Endothelial cell of umbilical vein (primary cell): ENCODE measurements at regions of chr2 and their contacts with region 1.

Region 1: GRCh38 chr2:120693121-120693520 is 42.5 kb upstream of the GLI2 start:
- DNase-seq: no peak
- H3K4me3 ChIP-seq: no peak overlapping the region
- H3K27ac ChIP-seq: no peak overlapping the region
- H3K4me1 ChIP-seq: peaks cover 5% of the 10 kb centered on the region
- H3K27me3 ChIP-seq: peaks cover 17% of the 10 kb centered on the region in 2 experiments
- CTCF ChIP-seq: no peak
- POLR2A ChIP-seq: no peak

Region 2: DNA sequence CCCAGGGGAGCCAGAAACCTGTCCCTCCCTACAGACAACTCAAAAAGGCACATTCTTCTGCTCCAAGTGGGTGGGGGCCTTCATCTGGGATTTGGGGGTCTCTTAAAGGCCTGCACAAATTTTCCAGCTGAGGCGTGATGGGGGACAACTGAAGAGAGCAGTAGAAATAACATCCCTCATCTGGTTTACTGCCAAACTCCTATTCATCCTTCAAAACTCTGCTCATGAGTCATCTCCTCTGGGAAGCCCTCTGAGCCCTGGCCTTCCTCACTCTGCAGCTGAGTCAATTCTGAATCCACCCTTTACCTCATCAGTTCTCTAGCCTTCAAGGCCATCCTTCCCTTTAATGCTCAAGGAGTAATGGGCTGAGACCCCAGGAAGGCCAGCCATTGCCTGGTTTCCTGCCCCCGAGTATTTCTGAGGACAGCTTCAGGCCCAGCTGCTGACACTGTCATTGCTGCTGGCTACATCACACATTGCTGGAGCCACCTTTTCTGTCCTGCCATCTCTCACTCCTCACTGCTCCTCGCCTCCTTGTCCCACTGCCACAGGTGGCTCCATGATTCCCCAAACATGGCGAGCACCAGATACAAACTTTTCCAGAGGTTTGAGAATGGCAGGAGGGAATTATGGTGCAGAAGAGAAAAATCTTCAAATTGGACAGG is 10.3 kb after region 1 on chr2:
- CTCF ChIA-PET with region 1: interaction called, 11 read pairs
- POLR2A ChIA-PET with region 1: no interaction called
- dilution Hi-C with region 1: no loop called
- intact Hi-C with region 1: no loop called
- DNase-seq: peak; percentile 61
- H3K4me3 ChIP-seq: no peak overlapping the region
- H3K27ac ChIP-seq: no peak overlapping the region
- H3K4me1 ChIP-seq: peaks cover 4% of the 10 kb centered on the region
- H3K27me3 ChIP-seq: peaks cover 2 to 5% of the 10 kb centered on the region in 2 experiments
- CTCF ChIP-seq: no peak
- POLR2A ChIP-seq: no peak

Region 3: GRCh38 chr2:120735746-120736170 is 42.6 kb after region 1 on chr2 and contains the start of gene GLI2:
- CTCF ChIA-PET with region 1: interaction called, 6 read pairs
- POLR2A ChIA-PET with region 1: no interaction called
- dilution Hi-C with region 1: no loop called
- intact Hi-C with region 1: loop called (anchors 2 kb)
- DNase-seq: peak; percentile 63
- H3K4me3 ChIP-seq: peak within 1 kb of the TSS in 1 of 3 experiments; percentile 8
- H3K27ac ChIP-seq: no peak within 1 kb of the TSS
- H3K4me1 ChIP-seq: no peaks in the 10 kb centered on the region
- H3K27me3 ChIP-seq: peaks cover 63 to 83% of the 10 kb centered on the region in 2 experiments
- CTCF ChIP-seq: peak; percentile 56 to 64
- POLR2A ChIP-seq: no peak
- total RNA-seq, gene GLI2: 0.13 and 0.51 TPM in 2 replicates

Region 4: DNA sequence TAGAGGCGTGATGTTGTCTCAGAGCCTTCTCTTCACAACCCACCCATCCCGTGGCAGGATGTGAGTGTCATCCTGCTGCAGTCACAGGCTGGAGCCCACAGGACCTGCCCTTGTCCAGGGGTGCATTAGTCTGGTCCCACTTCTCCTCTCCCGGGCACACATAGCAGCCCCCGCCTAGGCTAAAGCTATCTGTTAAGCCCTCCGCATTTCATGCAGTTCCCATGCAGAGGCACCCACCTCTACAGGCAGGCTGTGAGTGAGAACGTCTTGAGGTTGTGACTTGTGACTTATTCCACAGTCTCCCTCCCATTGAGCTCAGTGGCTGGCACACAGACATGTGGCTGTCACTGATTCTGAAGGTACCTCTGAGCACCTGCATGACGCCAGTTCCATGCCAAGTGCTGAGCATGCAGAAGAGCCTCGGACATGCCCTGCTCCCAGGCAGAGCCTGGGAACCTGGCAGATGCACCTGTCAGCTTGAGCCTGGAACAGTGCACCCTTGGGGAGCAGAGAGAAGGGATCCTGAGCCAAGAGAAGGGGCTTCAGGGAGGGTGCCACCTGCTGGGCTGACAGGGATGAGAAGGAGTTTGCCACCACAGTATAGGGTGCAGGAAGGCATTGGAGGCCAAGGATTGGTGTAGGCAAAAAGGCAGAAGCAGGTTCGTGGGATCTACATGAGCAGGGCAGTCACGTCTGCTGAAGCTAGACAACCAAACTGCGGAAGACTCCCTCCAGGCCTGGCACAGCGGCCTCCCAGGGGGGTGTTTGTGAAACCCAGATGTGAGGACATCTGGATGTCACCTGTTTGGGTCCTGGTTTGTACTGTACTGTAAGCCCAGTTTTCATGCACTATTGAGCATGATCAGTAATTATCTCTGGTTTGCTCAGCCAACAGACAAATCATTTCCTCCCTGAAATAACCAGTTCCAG is 256.2 kb after region 1 on chr2:
- CTCF ChIA-PET with region 1: interaction called, 25 read pairs
- POLR2A ChIA-PET with region 1: no interaction called
- dilution Hi-C with region 1: no loop called
- intact Hi-C with region 1: loop called (anchors 1 kb)
- DNase-seq: peak; percentile 21
- H3K4me3 ChIP-seq: no peak overlapping the region
- H3K27ac ChIP-seq: no peak overlapping the region
- H3K4me1 ChIP-seq: no peaks in the 10 kb centered on the region
- H3K27me3 ChIP-seq: peaks cover 0 to 2% of the 10 kb centered on the region in 2 experiments
- CTCF ChIP-seq: peak; percentile 17 to 51
- POLR2A ChIP-seq: no peak

Region 5: GRCh38 chr2:121071034-121071504 is 377.9 kb after region 1 on chr2:
- CTCF ChIA-PET with region 1: interaction called, 251 read pairs
- POLR2A ChIA-PET with region 1: no interaction called
- dilution Hi-C with region 1: no loop called
- intact Hi-C with region 1: loop called (anchors 1 kb)
- DNase-seq: peak; percentile 34
- H3K4me3 ChIP-seq: no peak overlapping the region
- H3K27ac ChIP-seq: no peak overlapping the region
- H3K4me1 ChIP-seq: peaks cover 4% of the 10 kb centered on the region
- H3K27me3 ChIP-seq: peaks cover 1 to 4% of the 10 kb centered on the region in 2 experiments
- CTCF ChIP-seq: peak; percentile 89 to 95
- POLR2A ChIP-seq: no peak